ENCODE measurements at regions of chr19 and their contacts with region 1.

Region 1: GRCh38 chr19:56594783-56595547 is at the start of gene ZNF71:
- DNase-seq: peak; percentile 82 to 87 (median 83)
- H3K4me3 ChIP-seq: peak within 1 kb of the TSS; percentile 55 to 57
- H3K4me3 Mint-ChIP-seq: peak within 1 kb of the TSS; percentile 88 to 98 (median 93)
- H3K27ac ChIP-seq: peak within 1 kb of the TSS; percentile 63
- H3K27ac Mint-ChIP-seq: peak within 1 kb of the TSS; percentile 54 to 94 (median 91)
- H3K4me1 ChIP-seq: peaks cover 17% of the 10 kb centered on the region
- H3K4me1 Mint-ChIP-seq: peaks cover 12 to 22% (median 16%) of the 10 kb centered on the region in 4 donors
- H3K27me3 ChIP-seq: no peaks in the 10 kb centered on the region
- H3K27me3 Mint-ChIP-seq: peaks cover 0 to 2% of the 10 kb centered on the region in 2 donors
- total RNA-seq, gene ZNF71: 8.2 to 8.3 TPM

Region 2: GRCh38 chr19:56403764-56404704 is 190.9 kb before region 1 on chr19 and contains the start of gene ZNF583:
- CTCF ChIA-PET with region 1: no interaction called
- POLR2A ChIA-PET with region 1: no interaction called
- intact Hi-C with region 1: loop called (anchors 5 kb)
- DNase-seq: peak; percentile 90 to 94 (median 92)
- H3K4me3 ChIP-seq: peak within 1 kb of the TSS; percentile 77 to 96
- H3K4me3 Mint-ChIP-seq: peak within 1 kb of the TSS; percentile 93 to 99 (median 97)
- H3K27ac ChIP-seq: peak within 1 kb of the TSS; percentile 92
- H3K27ac Mint-ChIP-seq: peak within 1 kb of the TSS; percentile 88 to 99 (median 98)
- H3K4me1 ChIP-seq: peaks cover 21% of the 10 kb centered on the region
- H3K4me1 Mint-ChIP-seq: peaks cover 20 to 36% (median 26%) of the 10 kb centered on the region in 4 donors
- H3K27me3 ChIP-seq: no peaks in the 10 kb centered on the region
- H3K27me3 Mint-ChIP-seq: no peaks in the 10 kb centered on the region
- total RNA-seq, gene ZNF583: 9.2 to 14.4 TPM

Region 3: GRCh38 chr19:56567274-56568120 is 27.5 kb before region 1 on chr19 and contains the start of gene ZNF470:
- CTCF ChIA-PET with region 1: no interaction called
- POLR2A ChIA-PET with region 1: interaction called, 6 read pairs
- intact Hi-C with region 1: loop called (anchors 1 kb)
- DNase-seq: peak; percentile 81 to 86 (median 82)
- H3K4me3 ChIP-seq: peak within 1 kb of the TSS; percentile 58 to 96
- H3K4me3 Mint-ChIP-seq: peak within 1 kb of the TSS; percentile 90 to 99 (median 94)
- H3K27ac ChIP-seq: peak within 1 kb of the TSS; percentile 59
- H3K27ac Mint-ChIP-seq: peak within 1 kb of the TSS; percentile 60 to 94 (median 87)
- H3K4me1 ChIP-seq: peaks cover 13% of the 10 kb centered on the region
- H3K4me1 Mint-ChIP-seq: peaks cover 8 to 23% (median 14%) of the 10 kb centered on the region in 4 donors
- H3K27me3 ChIP-seq: no peaks in the 10 kb centered on the region
- H3K27me3 Mint-ChIP-seq: no peaks in the 10 kb centered on the region
- total RNA-seq, gene ZNF470: 4.9 to 5.0 TPM

Region 4: GRCh38 chr19:56611288-56611687 is 16.3 kb after region 1 on chr19:
- CTCF ChIA-PET with region 1: no interaction called
- POLR2A ChIA-PET with region 1: no interaction called
- intact Hi-C with region 1: no loop called
- DNase-seq: no peak
- H3K4me3 ChIP-seq: no peak overlapping the region
- H3K4me3 Mint-ChIP-seq: no peak overlapping the region
- H3K27ac ChIP-seq: no peak overlapping the region
- H3K27ac Mint-ChIP-seq: no peak overlapping the region
- H3K4me1 ChIP-seq: no peaks in the 10 kb centered on the region
- H3K4me1 Mint-ChIP-seq: peaks cover 0 to 3% (median under 1%) of the 10 kb centered on the region in 4 donors
- H3K27me3 ChIP-seq: no peaks in the 10 kb centered on the region
- H3K27me3 Mint-ChIP-seq: no peaks in the 10 kb centered on the region

Region 5: DNA sequence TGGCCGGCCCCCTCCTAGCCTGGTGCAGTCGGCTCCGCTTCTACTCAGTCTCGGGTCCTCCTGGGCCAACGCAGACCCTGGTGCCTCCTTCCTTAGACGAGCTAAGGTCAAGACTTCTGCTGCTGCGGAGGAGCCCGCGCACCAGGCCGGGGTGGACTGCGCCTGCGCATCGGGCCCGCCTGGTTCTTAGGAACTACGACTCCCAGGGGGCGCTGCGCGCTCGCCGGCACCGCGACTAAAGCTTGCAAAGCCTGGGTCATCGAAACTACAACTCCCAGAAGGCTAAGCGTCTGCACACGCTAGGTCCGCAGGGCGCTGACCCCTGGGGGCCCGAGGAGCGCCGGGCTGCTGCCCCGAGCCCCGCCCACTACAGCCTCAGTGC is 76.6 kb after region 1 on chr19 and contains the start of gene ZNF835:
- CTCF ChIA-PET with region 1: no interaction called
- POLR2A ChIA-PET with region 1: no interaction called
- intact Hi-C with region 1: loop called (anchors 1 kb)
- DNase-seq: peak; percentile 61 to 80 (median 75)
- H3K4me3 ChIP-seq: peak within 1 kb of the TSS in 1 of 2 donors; percentile 46
- H3K4me3 Mint-ChIP-seq: peak within 1 kb of the TSS; percentile 75 to 93 (median 86)
- H3K27ac ChIP-seq: peak within 1 kb of the TSS; percentile 32
- H3K27ac Mint-ChIP-seq: peak within 1 kb of the TSS in 5 of 7 donors; percentile 80 to 91 (median 88)
- H3K4me1 ChIP-seq: peaks cover 11% of the 10 kb centered on the region
- H3K4me1 Mint-ChIP-seq: peaks cover 5 to 15% (median 5%) of the 10 kb centered on the region in 4 donors
- H3K27me3 ChIP-seq: no peaks in the 10 kb centered on the region
- H3K27me3 Mint-ChIP-seq: no peaks in the 10 kb centered on the region
- total RNA-seq, gene ZNF835: 3.2 to 3.8 TPM

Region 6: DNA sequence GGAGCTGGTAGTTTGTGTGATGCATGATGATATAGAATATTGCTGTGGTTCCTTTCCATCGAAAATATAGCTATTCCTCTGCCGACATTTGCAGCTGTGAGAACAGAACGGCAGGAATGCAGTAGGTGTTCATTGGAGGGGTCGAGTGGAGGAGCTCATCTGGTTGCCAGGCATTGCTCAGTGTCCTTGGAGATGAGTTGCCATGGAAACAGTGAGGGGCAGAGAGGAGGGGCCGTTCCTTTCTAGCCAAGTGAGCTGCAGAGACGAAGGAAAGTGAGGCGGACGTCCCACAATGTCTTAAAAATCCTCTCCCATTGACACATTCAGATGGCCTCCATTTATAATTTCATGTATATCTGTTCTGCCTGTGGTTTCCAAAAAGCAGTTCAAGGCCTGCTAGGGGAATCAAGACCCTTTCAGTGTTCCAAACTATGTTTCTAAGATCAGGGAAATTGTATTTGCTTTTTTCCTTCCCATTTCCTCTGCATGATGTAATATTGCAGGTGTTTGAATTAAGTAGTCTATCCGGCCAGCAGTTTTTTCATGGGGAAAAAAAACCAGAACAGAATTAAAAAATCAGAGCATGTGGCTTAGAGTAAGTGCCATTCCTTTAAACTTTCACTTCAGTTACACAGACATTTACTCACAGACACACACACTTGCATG is 117.8 kb after region 1 on chr19:
- CTCF ChIA-PET with region 1: no interaction called
- POLR2A ChIA-PET with region 1: no interaction called
- intact Hi-C with region 1: no loop called
- DNase-seq: no peak
- H3K4me3 ChIP-seq: no peak overlapping the region
- H3K4me3 Mint-ChIP-seq: no peak overlapping the region
- H3K27ac ChIP-seq: no peak overlapping the region
- H3K27ac Mint-ChIP-seq: no peak overlapping the region
- H3K4me1 ChIP-seq: no peaks in the 10 kb centered on the region
- H3K4me1 Mint-ChIP-seq: no peaks in the 10 kb centered on the region
- H3K27me3 ChIP-seq: no peaks in the 10 kb centered on the region
- H3K27me3 Mint-ChIP-seq: no peaks in the 10 kb centered on the region

Measured in CD4-positive, alpha-beta memory T cell (primary cell).